CD14-positive monocyte (primary cell): ENCODE measurements at regions of chr15 and their contacts with region 1.

Region 1: DNA sequence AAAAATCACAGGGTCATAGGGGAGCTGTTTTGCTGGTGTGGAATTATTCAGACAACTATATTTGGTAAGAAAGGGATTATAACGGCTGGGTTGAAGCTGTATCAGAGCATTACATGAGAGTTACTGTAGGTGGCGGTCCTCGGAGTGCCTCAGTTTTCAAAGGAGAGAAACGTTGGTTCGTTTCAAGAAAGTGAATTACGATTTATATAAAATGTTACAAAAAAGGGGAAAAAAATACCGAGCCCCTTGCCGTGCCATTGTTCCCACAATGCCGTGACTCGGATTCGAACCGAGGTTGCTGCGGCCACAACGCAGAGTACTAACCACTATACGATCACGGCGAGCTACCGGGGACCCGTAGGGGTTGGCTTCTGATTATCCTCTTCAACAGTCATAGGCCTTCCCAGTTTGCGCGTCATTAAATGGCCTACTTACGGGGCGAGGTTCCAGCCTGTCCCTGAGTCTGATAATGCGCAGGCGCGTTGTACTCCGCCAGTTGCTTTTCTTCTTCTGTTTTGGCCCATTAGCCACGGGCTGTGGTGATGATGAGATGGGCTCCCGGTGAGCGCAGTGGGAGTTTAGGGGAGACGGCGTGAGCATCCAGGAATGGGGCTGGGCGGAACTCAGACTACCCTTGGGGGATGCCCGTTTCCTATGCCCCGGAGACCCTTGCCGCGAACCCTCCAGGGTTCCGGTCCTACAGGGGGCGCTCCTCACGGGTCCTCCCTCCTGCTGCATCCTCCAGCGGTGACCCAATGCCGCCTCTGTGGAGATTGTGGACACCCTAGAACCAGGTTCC is 10.8 kb upstream of the SHF start:
- DNase-seq: peak; percentile 98 to 99 (median 98)
- H3K4me3 ChIP-seq: peak overlapping the region; percentile 68 to 95 (median 91)
- H3K4me3 Mint-ChIP-seq: peak overlapping the region in 1 of 2 donors; percentile 88
- H3K27ac ChIP-seq: peak overlapping the region; percentile 97 to 99
- H3K27ac Mint-ChIP-seq: peak overlapping the region in 1 of 7 donors; percentile 82
- H3K4me1 ChIP-seq: peaks cover 34 to 40% of the 10 kb centered on the region in 2 donors
- H3K4me1 Mint-ChIP-seq: peaks cover 28% of the 10 kb centered on the region
- H3K27me3 ChIP-seq: no peaks in the 10 kb centered on the region
- H3K27me3 Mint-ChIP-seq: peaks cover 0 to 8% (median 2%) of the 10 kb centered on the region in 3 donors
- CTCF ChIP-seq: peak; percentile 67

Region 2: GRCh38 chr15:44545913-44546802 is 652.4 kb before region 1 on chr15:
- intact Hi-C with region 1: loop called in 1 of 2 experiments (anchors 10 kb)
- DNase-seq: peak; percentile 58 to 71 (median 63)
- H3K4me3 ChIP-seq: no peak overlapping the region
- H3K4me3 Mint-ChIP-seq: no peak overlapping the region
- H3K27ac ChIP-seq: peak overlapping the region in 1 of 2 donors; percentile 66
- H3K27ac Mint-ChIP-seq: peak overlapping the region; percentile 62 to 84 (median 73)
- H3K4me1 ChIP-seq: peaks cover 0 to 15% of the 10 kb centered on the region in 2 donors
- H3K4me1 Mint-ChIP-seq: peaks cover 28% of the 10 kb centered on the region
- H3K27me3 ChIP-seq: no peaks in the 10 kb centered on the region
- H3K27me3 Mint-ChIP-seq: peaks cover 0 to 3% (median 0%) of the 10 kb centered on the region in 3 donors
- CTCF ChIP-seq: peak; percentile 38

Region 3: GRCh38 chr15:45166834-45167630 is 31.5 kb before region 1 on chr15:
- intact Hi-C with region 1: loop called (anchors 2 to 5 kb)
- DNase-seq: peak; percentile 87 to 92 (median 88)
- H3K4me3 ChIP-seq: peak overlapping the region; percentile 60 to 76 (median 64)
- H3K4me3 Mint-ChIP-seq: peak overlapping the region; percentile 48 to 62
- H3K27ac ChIP-seq: peak overlapping the region; percentile 76 to 90
- H3K27ac Mint-ChIP-seq: peak overlapping the region in 6 of 7 donors; percentile 23 to 84 (median 64)
- H3K4me1 ChIP-seq: peaks cover 18 to 26% of the 10 kb centered on the region in 2 donors
- H3K4me1 Mint-ChIP-seq: peaks cover 29% of the 10 kb centered on the region
- H3K27me3 ChIP-seq: no peaks in the 10 kb centered on the region
- H3K27me3 Mint-ChIP-seq: peaks cover 0 to 4% (median 0%) of the 10 kb centered on the region in 3 donors
- CTCF ChIP-seq: peak; percentile 88